ENCODE measurements at regions of chr3 and their contacts with region 1.

Region 1: DNA sequence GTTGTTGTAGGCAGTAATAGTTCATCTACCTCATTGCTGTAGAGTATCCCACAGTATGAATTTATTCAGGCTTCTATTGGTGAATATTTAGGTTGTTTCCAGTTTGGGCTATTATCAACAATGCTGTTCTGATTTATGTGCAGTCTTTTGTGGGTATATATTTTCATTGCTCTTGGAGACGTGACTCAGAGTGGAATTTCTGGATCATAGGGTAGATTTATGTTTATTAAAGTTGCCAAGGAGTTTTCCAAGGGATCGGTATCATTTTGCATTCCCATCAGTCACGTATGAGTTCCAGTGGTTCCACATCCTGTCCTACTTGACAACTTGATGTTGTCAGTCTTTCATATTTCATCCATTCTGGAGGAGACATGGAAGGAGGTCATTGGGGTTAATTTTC is 8.4 kb upstream of the HRH1 start:
- DNase-seq: no peak
- H3K4me3 ChIP-seq: no peak overlapping the region
- CTCF ChIP-seq: no peak
- POLR2A ChIP-seq: no peak

Region 2: GRCh38 chr3:10722911-10723310 is 423.0 kb before region 1 on chr3:
- intact Hi-C with region 1: no loop called
- DNase-seq: peak in 1 of 2 donors; percentile 70
- H3K4me3 ChIP-seq: no peak overlapping the region
- CTCF ChIP-seq: no peak
- POLR2A ChIP-seq: no peak

Region 3: GRCh38 chr3:12929801-12930200 is 1783.9 kb after region 1 on chr3:
- intact Hi-C with region 1: loop called (anchors 5 kb)
- DNase-seq: no peak
- H3K4me3 ChIP-seq: no peak overlapping the region
- CTCF ChIP-seq: no peak
- POLR2A ChIP-seq: no peak